HCT116 (cell line): ENCODE measurements at regions of chr1 and their contacts with region 1.

Region 1: GRCh38 chr1:30957560-30958222 is 49.1 kb upstream of the SDC3 start:
- DNase-seq: no peak
- ATAC-seq: no peak
- H3K4me3 ChIP-seq: no peak overlapping the region
- H3K27ac ChIP-seq: no peak overlapping the region
- H3K4me1 ChIP-seq: no peaks in the 10 kb centered on the region
- H3K27me3 ChIP-seq: no peaks in the 10 kb centered on the region
- CTCF ChIP-seq: no peak
- POLR2A ChIP-seq: no peak
- RAD21 ChIP-seq: no peak

Region 2: DNA sequence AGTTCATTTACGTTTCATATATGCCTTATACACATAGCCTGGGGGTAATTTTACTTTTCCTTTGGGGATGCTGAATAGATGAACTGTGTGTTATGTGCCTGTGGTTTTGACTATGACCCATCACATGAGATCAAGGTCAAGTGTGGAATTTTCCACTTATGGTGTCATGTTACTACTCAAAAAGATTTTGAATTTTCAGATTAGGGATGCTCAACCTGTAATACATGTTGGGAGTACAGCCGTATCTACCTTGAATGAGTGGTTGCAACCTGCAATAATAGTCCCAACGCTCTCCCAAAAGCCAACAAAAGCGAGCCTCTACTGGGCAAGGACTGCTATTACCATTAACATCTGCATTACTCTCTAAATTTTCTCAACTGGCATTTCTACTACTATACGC is 19.4 kb after region 1 on chr1:
- CTCF ChIA-PET with region 1: no interaction called
- POLR2A ChIA-PET with region 1: no interaction called
- RAD21 ChIA-PET with region 1: no interaction called
- intact Hi-C with region 1: loop called (anchors 2 kb)
- DNase-seq: no peak
- ATAC-seq: peak; percentile 80
- H3K4me3 ChIP-seq: no peak overlapping the region
- H3K27ac ChIP-seq: no peak overlapping the region
- H3K4me1 ChIP-seq: peaks cover 15 to 17% of the 10 kb centered on the region in 2 experiments; a peak in 3 of 4 replicates
- H3K27me3 ChIP-seq: no peaks in the 10 kb centered on the region
- CTCF ChIP-seq: peak in 2 of 3 experiments; percentile 24 to 45; a peak in 3 of 6 replicates
- POLR2A ChIP-seq: no peak
- RAD21 ChIP-seq: no peak

Region 3: DNA sequence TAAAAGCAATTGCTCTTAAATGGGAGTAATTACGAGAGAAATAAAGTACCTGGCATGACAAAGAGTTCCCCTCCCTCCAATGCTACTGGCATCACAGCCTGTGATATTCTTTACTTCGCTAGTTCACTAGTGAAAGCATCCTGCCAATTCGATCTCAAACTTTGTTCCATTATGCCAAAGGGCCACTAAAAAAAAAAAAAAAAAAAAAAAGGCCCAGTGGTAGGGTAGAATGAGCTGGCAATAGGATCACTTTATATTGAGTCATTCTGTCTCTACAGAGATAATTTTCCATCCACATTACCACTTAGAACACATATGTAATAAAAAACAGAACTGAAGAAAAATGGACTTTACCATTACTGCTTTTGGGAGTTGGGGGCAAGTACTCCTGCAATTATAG is 96.7 kb after region 1 on chr1:
- CTCF ChIA-PET with region 1: no interaction called
- POLR2A ChIA-PET with region 1: no interaction called
- RAD21 ChIA-PET with region 1: no interaction called
- intact Hi-C with region 1: no loop called
- DNase-seq: no peak
- ATAC-seq: no peak
- H3K4me3 ChIP-seq: no peak overlapping the region
- H3K27ac ChIP-seq: no peak overlapping the region
- H3K4me1 ChIP-seq: peaks cover 0 to 4% of the 10 kb centered on the region in 2 experiments; a peak in 1 of 4 replicates
- H3K27me3 ChIP-seq: no peaks in the 10 kb centered on the region
- CTCF ChIP-seq: no peak
- POLR2A ChIP-seq: no peak
- RAD21 ChIP-seq: no peak

Region 4: DNA sequence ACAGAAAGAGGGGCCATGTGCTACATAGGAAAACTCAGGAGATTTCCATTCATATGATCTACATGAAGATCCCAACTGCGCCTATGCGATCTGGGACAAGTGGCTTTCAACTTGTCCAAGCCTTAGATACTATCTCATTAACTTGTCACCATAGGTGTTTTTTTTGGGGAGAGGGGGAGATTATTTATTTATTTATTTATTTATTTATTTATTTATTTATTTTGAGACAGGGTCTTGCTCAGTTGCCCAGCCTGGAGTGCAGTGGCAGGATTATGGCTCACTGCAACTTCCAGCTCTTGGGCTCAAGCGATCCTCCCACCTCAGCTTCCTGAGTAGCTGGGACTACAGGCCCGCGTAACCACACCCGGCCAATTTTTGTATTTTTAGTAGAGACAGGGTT is 403.9 kb after region 1 on chr1:
- CTCF ChIA-PET with region 1: no interaction called
- POLR2A ChIA-PET with region 1: no interaction called
- RAD21 ChIA-PET with region 1: no interaction called
- intact Hi-C with region 1: no loop called
- DNase-seq: no peak
- ATAC-seq: no peak
- H3K4me3 ChIP-seq: no peak overlapping the region
- H3K27ac ChIP-seq: no peak overlapping the region
- H3K4me1 ChIP-seq: no peaks in the 10 kb centered on the region
- H3K27me3 ChIP-seq: no peaks in the 10 kb centered on the region
- CTCF ChIP-seq: no peak
- POLR2A ChIP-seq: no peak
- RAD21 ChIP-seq: no peak